Activated naive CD4-positive, alpha-beta T cell treated with anti-CD3 and anti-CD28 coated beads, Interleukin-2, amount 10 ng/mL, durations not matched to agents 7 days and 5 days (primary cell): ENCODE measurements at regions of chr12 and their contacts with region 1.

Region 1: DNA sequence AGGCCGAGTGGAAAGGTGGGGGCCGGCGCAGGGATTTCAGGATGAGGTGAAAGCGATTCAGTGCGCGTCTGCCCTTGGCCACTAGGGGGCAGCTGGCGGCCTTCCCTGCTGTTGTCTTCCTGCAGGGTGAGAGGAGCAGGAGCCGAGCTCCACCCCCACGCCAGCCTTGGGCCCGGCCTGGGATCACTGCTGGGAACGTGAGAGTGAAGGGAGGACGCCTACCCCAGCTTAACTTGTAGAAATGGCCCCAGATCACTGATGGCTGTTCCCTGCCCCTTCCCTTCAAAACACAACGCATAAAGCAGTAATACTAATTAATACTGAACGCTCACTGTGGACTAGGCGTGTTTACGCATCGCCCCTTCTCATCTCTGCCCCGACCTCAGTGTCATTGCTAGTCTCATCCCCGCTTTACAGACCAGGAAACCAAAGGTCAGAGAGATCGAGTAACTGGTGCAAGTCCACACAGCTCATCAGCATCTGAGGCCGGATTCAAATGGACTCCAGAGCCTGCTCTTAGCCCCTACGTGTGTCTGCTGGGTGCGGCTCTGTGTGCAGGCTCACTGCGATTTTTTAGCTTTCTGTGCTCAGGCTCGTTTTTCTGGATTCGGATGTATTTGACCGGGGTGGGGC is 24.3 kb downstream of the MVK start:
- DNase-seq: peak; percentile 73
- H3K4me3 Mint-ChIP-seq: no peak overlapping the region
- H3K27ac Mint-ChIP-seq: no peak overlapping the region
- H3K4me1 Mint-ChIP-seq: peaks cover 29% of the 10 kb centered on the region
- H3K27me3 Mint-ChIP-seq: peaks cover 22% of the 10 kb centered on the region

Region 2: DNA sequence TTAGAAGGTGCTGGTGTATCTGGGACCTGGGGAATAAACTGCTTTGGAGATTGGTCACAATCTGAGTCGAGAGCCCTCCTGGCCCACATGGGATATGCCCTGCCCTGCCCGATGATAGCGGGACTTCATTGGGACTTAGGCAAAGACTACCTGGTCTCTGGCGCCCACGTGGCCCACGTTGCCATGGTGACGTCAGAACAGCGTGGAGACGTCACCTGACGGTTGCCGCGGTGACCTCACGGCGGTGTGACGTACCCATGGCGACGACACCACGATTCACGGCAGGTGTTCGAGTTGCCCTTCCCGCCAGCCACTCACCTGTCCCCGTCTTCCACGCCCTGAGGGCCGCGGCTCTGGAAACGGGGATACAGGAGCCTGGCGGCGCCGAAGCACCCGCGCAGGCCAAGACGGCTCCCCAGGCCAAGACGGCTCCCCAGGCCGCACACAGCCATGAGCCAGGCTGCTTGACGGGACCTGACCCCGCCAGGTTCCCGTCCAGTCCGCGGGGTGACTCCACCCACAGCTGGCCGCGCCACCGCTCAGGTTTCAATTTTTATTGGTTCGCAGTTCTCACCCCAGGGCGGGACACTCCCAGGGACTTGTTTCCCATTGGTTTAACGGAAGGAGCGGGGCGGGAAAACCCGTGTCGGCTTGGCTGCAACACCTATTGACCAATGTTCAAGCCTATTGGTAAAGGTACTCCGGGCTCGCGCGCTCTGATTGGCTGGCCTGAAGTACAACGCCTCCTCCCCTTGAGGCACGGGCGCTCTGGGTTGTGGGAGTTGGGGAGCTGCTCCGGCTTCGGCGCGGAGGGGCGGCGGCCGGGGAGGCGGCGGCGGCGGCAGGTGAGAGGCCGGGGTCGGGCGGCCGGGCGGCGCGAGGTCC is 24.6 kb before region 1 on chr12 and contains the starts of genes MMAB and MVK:
- CTCF ChIA-PET with region 1: interaction called, 17 read pairs
- DNase-seq: peak; percentile 100
- H3K4me3 Mint-ChIP-seq: peak within 1 kb of the TSS; percentile 88
- H3K27ac Mint-ChIP-seq: peak within 1 kb of the TSS; percentile 90
- H3K4me1 Mint-ChIP-seq: peaks cover 33% of the 10 kb centered on the region
- H3K27me3 Mint-ChIP-seq: peaks cover 6% of the 10 kb centered on the region

Region 3: DNA sequence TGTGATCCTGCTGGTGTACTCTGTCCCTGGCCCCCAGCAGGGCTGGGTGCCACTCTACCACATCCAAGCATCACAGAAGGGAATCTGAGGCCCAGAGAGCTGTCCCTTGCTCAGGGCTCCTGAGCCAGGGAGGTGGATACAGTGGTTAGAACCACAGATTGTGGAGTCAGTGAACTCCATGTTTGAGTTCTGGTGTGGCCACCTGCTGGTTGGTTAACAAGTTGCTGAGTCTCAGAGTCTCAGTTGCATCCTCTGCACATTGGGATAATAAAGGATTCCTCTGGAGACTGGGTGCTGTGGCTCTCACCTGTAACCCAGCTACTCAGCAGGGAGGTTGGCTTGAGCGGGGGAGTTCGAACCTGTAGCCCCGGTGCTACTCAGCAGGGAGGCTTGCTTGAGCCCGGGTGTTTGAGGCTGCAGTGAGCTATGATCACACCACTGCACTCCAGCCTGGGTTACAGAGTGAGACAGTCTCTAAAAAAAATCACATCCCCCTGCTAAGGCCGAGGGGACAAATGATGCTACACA is 15.1 kb after region 1 on chr12:
- CTCF ChIA-PET with region 1: interaction called, 13 read pairs
- DNase-seq: no peak
- H3K4me3 Mint-ChIP-seq: no peak overlapping the region
- H3K27ac Mint-ChIP-seq: no peak overlapping the region
- H3K4me1 Mint-ChIP-seq: no peaks in the 10 kb centered on the region
- H3K27me3 Mint-ChIP-seq: peaks cover 72% of the 10 kb centered on the region

Region 4: DNA sequence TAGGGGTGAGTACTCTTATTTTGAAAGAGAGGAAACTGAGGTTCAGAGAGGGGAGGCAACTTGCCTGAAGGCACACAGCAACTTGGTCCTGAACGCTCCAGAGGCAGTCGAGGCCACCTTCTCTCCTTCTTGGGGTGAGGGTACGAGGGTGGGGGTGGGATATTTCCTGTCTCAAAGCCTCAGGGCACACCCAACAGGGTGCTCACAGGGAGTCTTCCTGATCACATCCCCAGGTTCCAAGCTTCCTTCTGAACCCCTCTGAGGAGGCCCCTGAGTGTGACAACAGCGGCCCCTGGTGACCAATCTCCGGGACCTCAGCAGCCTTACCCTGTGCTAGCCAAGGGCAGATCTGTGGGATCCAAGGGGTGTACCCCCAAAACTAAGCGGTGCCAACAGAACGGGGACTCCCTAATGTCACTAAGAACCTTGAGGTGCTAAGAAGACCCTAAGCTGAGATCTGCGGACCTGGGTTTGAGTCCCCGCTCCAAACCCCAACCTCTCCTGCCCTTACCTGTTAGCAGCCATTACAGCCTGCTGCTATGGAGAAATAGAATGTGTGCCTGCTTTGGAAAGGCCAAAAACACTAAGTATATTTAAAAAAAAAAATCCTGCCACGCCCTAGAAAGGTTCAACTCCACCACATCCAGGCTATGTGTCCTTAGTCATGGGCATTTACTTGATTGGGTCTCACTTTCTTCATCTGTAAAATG is 177.4 kb after region 1 on chr12:
- CTCF ChIA-PET with region 1: interaction called, 42 read pairs
- DNase-seq: peak; percentile 83
- H3K4me3 Mint-ChIP-seq: no peak overlapping the region
- H3K27ac Mint-ChIP-seq: no peak overlapping the region
- H3K4me1 Mint-ChIP-seq: peaks cover 10% of the 10 kb centered on the region
- H3K27me3 Mint-ChIP-seq: peaks cover 34% of the 10 kb centered on the region